Common myeloid progenitor, CD34-positive (primary cell): ENCODE measurements at regions of chr1 and their contacts with region 1.

Region 1: GRCh38 chr1:112715264-112716053 is at the start of gene PPM1J:
- DNase-seq: peak; percentile 90 to 96 (median 96)
- H3K4me3 ChIP-seq: peak within 1 kb of the TSS; percentile 32 to 89 (median 70)
- H3K27ac ChIP-seq: no peak within 1 kb of the TSS
- H3K4me1 ChIP-seq: peaks cover 0 to 32% (median 29%) of the 10 kb centered on the region in 4 experiments
- H3K27me3 ChIP-seq: peaks cover 0 to 33% (median 3%) of the 10 kb centered on the region in 5 experiments

Region 2: GRCh38 chr1:112660072-112660471 is 55.4 kb before region 1 on chr1:
- CTCF ChIA-PET with region 1: no interaction called
- POLR2A ChIA-PET with region 1: no interaction called
- DNase-seq: no peak
- H3K4me3 ChIP-seq: no peak overlapping the region
- H3K27ac ChIP-seq: no peak overlapping the region
- H3K4me1 ChIP-seq: no peaks in the 10 kb centered on the region
- H3K27me3 ChIP-seq: no peaks in the 10 kb centered on the region

Region 3: DNA sequence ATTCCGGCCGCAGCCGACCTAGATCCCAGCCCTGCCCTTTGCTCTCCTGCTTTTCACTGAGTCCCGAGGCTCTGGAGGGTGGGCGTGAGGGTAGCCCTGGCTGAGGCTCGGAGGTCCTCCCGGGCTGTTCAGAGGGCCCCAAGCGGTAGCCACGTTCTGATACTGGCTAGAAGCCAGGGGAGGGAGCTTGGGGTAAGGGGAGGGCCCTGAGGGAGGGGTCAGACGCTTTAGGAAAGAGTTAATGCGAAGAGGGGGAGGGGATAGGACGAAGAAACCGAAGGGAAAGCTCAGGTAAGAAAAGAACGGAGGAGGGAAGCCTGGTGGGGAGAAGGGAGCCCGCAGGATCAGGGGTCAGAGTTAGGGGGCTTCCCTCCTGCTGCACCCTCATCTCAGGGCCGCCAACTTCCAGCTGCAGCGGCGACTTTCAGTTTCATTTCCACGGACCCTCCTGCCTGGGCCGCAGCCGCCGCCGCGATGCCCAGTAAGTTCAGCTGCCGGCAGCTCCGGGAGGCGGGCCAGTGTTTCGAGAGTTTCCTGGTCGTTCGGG is 40.9 kb before region 1 on chr1 and contains the start of gene MOV10:
- CTCF ChIA-PET with region 1: interaction called, 12 read pairs
- POLR2A ChIA-PET with region 1: no interaction called
- DNase-seq: peak; percentile 68 to 89 (median 85)
- H3K4me3 ChIP-seq: peak within 1 kb of the TSS; percentile 65 to 95 (median 88)
- H3K27ac ChIP-seq: peak within 1 kb of the TSS in 1 of 2 experiments; percentile 77
- H3K4me1 ChIP-seq: peaks cover 7 to 22% (median 18%) of the 10 kb centered on the region in 4 experiments
- H3K27me3 ChIP-seq: no peaks in the 10 kb centered on the region

Region 4: DNA sequence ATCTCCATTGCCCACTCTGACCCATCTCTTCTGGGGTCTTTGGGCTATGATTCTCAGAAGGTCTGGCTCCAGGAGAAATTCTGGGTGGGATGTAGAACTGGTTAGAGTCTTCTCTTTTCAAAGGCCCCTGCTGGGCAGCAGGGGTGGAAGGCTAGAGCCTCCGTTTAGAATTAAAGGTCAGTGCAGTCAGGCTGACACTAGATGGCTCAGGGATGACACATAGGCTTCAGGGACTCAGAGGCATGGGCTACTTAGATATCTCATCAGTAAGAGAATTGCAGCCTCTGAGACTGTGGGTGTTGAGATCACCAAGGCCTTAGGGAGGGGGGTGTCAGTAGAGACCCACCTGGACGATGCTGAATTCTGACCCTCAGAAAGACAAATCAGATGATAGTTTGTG is 12.3 kb after region 1 on chr1:
- CTCF ChIA-PET with region 1: interaction called, 51 read pairs
- POLR2A ChIA-PET with region 1: no interaction called
- DNase-seq: no peak
- H3K4me3 ChIP-seq: no peak overlapping the region
- H3K27ac ChIP-seq: no peak overlapping the region
- H3K4me1 ChIP-seq: peaks cover 0 to 14% (median 12%) of the 10 kb centered on the region in 4 experiments
- H3K27me3 ChIP-seq: no peaks in the 10 kb centered on the region

Region 5: GRCh38 chr1:112798292-112798691 is 82.8 kb after region 1 on chr1:
- CTCF ChIA-PET with region 1: interaction called, 268 read pairs
- POLR2A ChIA-PET with region 1: no interaction called
- DNase-seq: no peak
- H3K4me3 ChIP-seq: no peak overlapping the region
- H3K27ac ChIP-seq: no peak overlapping the region
- H3K4me1 ChIP-seq: no peaks in the 10 kb centered on the region
- H3K27me3 ChIP-seq: no peaks in the 10 kb centered on the region

Region 6: GRCh38 chr1:112869895-112870294 is 154.4 kb after region 1 on chr1:
- CTCF ChIA-PET with region 1: no interaction called
- POLR2A ChIA-PET with region 1: no interaction called
- DNase-seq: no peak
- H3K4me3 ChIP-seq: no peak overlapping the region
- H3K27ac ChIP-seq: no peak overlapping the region
- H3K4me1 ChIP-seq: peaks cover 0 to 3% (median 0%) of the 10 kb centered on the region in 4 experiments
- H3K27me3 ChIP-seq: no peaks in the 10 kb centered on the region

Region 7: GRCh38 chr1:113042285-113043143 is 327.1 kb after region 1 on chr1:
- CTCF ChIA-PET with region 1: interaction called, 11 read pairs
- POLR2A ChIA-PET with region 1: no interaction called
- DNase-seq: peak; percentile 80 to 85 (median 84)
- H3K4me3 ChIP-seq: peak overlapping the region in 1 of 7 experiments; percentile 11
- H3K27ac ChIP-seq: no peak overlapping the region
- H3K4me1 ChIP-seq: peaks cover 9 to 33% (median 16%) of the 10 kb centered on the region in 4 experiments
- H3K27me3 ChIP-seq: no peaks in the 10 kb centered on the region

Region 8: DNA sequence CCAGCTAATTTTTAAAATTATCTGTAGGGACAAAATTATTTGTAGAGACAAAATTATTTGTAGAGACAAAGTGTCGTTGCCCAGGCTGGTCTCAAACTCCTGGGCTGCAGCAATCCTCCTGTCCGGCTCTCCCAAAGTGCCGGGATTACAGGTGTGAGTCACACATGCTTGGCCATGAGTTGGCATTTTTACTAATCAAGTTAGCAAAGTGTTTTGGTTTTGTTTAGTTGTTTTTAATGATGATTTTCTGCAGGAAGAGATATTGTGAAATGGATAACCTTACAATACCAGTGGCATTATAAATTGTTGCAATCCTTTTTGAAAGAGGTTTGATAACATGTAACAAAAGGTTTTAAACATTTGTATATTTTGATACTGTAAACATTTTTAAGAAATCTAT is 609.6 kb after region 1 on chr1:
- CTCF ChIA-PET with region 1: no interaction called
- POLR2A ChIA-PET with region 1: no interaction called
- DNase-seq: no peak
- H3K4me3 ChIP-seq: no peak overlapping the region
- H3K27ac ChIP-seq: no peak overlapping the region
- H3K4me1 ChIP-seq: no peaks in the 10 kb centered on the region
- H3K27me3 ChIP-seq: no peaks in the 10 kb centered on the region